ENCODE measurements at regions of chr19 and their contacts with region 1.

Region 1: GRCh38 chr19:3075895-3076431 is 13.7 kb upstream of the TLE5 start:
- DNase-seq: peak; percentile 86
- ATAC-seq: peak; percentile 88
- H3K4me3 Mint-ChIP-seq: no peak overlapping the region
- H3K27ac Mint-ChIP-seq: no peak overlapping the region
- H3K4me1 Mint-ChIP-seq: peaks cover 4% of the 10 kb centered on the region
- H3K27me3 Mint-ChIP-seq: no peaks in the 10 kb centered on the region

Region 2: DNA sequence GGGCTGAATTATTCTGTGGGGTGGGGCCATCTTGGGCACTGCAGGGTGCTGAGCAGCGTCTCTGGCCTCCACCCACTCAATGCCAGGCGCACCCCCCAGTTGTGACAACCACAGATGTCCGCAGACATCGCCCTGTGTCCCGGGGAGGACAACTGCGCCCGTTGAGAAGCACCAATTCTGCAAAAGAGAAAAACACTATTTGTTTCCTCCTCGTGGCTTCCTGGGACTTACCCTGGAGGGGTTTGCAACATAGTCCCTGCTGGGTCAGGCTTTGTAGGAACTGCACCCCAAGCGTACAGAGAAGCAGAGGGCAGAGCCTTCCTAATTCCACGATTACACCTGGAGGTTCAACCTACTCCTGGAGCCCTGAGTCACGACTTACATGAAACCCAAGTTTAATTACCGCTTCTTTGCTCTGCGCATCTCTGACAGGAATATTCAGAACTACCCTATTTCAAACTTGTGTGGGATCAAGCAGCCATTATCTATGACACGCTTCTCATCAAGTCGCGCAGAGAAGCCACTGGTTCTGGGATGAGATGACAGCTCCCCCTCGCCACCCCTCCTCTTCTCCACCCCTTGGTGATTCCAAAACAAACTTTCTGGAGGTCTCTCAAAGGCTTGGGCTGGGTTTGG is 325.0 kb before region 1 on chr19:
- CTCF ChIA-PET with region 1: no interaction called
- POLR2A ChIA-PET with region 1: no interaction called
- intact Hi-C with region 1: no loop called
- DNase-seq: no peak
- ATAC-seq: no peak
- H3K4me3 Mint-ChIP-seq: no peak overlapping the region
- H3K27ac Mint-ChIP-seq: no peak overlapping the region
- H3K4me1 Mint-ChIP-seq: peaks cover 9% of the 10 kb centered on the region
- H3K27me3 Mint-ChIP-seq: no peaks in the 10 kb centered on the region

Region 3: DNA sequence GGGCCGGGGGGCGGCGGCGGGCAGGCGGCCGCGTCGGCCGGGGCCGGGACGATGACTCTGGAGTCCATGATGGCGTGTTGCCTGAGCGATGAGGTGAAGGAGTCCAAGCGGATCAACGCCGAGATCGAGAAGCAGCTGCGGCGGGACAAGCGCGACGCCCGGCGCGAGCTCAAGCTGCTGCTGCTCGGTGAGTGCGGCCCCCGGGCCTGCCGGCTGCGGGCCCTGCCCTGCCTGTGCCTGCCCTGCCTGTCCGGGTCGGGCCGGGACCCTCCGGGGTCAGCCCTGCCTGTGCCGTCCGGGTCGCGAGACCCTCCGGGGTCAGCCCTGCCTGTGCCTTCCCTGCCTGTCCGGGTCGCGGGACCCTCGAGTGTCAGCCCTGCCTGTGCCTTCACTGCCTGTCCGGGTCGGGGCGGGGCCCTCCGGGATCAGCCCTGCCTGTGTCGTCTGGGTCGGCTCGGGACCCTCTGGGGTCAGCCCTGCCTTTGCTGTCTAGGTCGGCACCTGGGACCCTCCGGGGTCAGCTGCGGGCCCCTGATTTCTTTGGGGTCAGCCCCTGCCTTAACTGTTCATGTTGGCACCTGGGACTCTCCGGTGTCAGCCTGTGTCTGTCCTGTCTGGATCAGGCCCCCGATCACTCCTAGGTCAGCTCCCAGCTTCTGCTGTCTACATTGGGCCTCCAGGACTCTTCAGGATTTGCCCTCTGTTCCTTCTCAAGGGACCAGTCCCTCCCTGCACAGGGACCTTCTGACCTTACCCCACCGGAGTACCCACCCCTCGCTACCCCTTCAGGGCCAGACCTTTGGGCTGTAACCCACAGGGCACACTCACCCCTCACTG is 18.9 kb after region 1 on chr19:
- CTCF ChIA-PET with region 1: interaction called, 4 read pairs
- POLR2A ChIA-PET with region 1: no interaction called
- intact Hi-C with region 1: loop called in 1 of 2 experiments (anchors 1 kb)
- DNase-seq: peak; percentile 68
- ATAC-seq: peak; percentile 45
- H3K4me3 Mint-ChIP-seq: peak overlapping the region; percentile 74
- H3K27ac Mint-ChIP-seq: no peak overlapping the region
- H3K4me1 Mint-ChIP-seq: peaks cover 26% of the 10 kb centered on the region
- H3K27me3 Mint-ChIP-seq: no peaks in the 10 kb centered on the region

Region 4: GRCh38 chr19:3108775-3109174 is 32.8 kb after region 1 on chr19:
- CTCF ChIA-PET with region 1: interaction called, 20 read pairs
- POLR2A ChIA-PET with region 1: no interaction called
- intact Hi-C with region 1: loop called (anchors 1 kb)
- DNase-seq: peak; percentile 84
- ATAC-seq: peak; percentile 80
- H3K4me3 Mint-ChIP-seq: no peak overlapping the region
- H3K27ac Mint-ChIP-seq: no peak overlapping the region
- H3K4me1 Mint-ChIP-seq: peaks cover 6% of the 10 kb centered on the region
- H3K27me3 Mint-ChIP-seq: no peaks in the 10 kb centered on the region

Region 5: GRCh38 chr19:3163230-3163886 is 87.4 kb after region 1 on chr19:
- CTCF ChIA-PET with region 1: no interaction called
- POLR2A ChIA-PET with region 1: no interaction called
- intact Hi-C with region 1: loop called (anchors 1 to 10 kb)
- DNase-seq: peak; percentile 82
- ATAC-seq: peak; percentile 82
- H3K4me3 Mint-ChIP-seq: no peak overlapping the region
- H3K27ac Mint-ChIP-seq: peak overlapping the region; percentile 42
- H3K4me1 Mint-ChIP-seq: peaks cover 23% of the 10 kb centered on the region
- H3K27me3 Mint-ChIP-seq: no peaks in the 10 kb centered on the region

Region 6: DNA sequence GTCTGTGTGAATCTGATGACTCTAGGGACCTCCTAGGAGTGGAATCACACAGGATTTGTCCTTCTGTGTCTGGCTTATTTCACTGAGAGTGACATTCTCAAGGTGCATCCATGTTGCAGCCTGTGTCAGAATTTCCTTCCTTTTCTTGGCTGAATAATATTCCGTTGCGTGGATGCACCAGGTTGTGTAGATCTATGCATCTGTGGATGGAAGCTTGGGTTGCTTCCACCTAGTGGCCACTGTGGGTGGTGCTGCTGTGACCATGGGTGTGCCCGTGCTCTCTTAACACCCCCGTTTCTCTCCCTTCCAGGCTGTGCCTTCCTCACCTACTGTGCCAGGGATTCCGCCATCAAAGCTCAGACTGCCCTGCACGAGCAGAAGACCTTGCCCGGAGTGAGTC is 174.7 kb after region 1 on chr19:
- CTCF ChIA-PET with region 1: no interaction called
- POLR2A ChIA-PET with region 1: no interaction called
- intact Hi-C with region 1: loop called in 1 of 2 experiments (anchors 1 kb)
- DNase-seq: peak; percentile 69
- ATAC-seq: peak; percentile 83
- H3K4me3 Mint-ChIP-seq: no peak overlapping the region
- H3K27ac Mint-ChIP-seq: no peak overlapping the region
- H3K4me1 Mint-ChIP-seq: no peaks in the 10 kb centered on the region
- H3K27me3 Mint-ChIP-seq: peaks cover 18% of the 10 kb centered on the region

Measured in activated CD4-positive, alpha-beta T cell treated with anti-CD3 and anti-CD28 coated beads for 36 hours (primary cell).